Right lobe of liver (tissue), 6 donors: ENCODE measurements at regions of chr11 and their contacts with region 1.

Region 1: DNA sequence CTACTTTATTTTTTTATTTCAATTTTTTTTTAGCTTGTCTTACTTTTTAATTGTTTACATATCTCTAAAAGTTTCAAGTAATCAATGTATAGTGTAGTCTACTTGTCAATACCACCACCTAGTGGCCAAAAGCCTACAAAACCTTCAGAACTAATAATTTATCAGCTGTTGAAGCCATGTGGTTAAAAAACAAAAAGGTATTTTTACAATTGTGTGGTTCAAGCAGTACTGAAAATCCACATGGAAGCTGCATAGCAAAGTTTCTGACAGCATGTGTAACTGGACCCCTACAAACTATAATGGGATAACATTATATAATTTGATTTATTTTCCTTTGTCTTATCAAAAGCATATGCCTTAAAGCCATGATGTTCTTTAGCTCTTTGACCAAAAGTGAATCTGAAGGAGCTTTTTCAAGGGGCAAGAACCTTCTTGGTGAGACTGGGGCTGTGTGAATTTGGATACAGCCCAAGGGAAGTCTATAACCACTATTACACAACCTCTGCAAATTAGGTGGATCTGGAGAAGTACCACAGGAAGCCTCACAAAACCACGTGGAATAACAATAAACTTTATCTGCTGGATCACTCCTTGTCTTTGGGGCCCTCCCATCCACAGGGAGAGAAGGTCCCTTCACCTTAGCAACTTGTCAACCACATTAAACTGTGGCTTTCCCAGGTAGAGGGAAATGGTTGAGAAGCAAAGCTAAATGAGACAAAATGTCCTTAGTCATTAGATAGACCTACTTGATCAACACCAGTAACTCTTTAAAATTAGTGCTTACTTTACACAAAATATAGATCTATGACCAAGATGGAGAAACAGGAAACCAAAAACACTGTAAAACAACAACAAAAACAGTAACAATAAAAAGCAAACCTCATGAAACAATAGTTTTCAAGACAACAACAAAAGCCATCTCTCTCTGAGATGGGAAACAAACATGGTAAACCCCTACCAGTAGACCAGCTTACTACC is 9.9 kb downstream of the NARS2 start:
- DNase-seq: no peak
- ATAC-seq: peak; percentile 72 to 77 (median 74)
- H3K4me3 ChIP-seq: no peak overlapping the region
- H3K27ac ChIP-seq: no peak overlapping the region
- H3K4me1 ChIP-seq: peaks cover 0 to 15% (median 7%) of the 10 kb centered on the region in 4 donors
- H3K27me3 ChIP-seq: no peaks in the 10 kb centered on the region
- CTCF ChIP-seq: peak; percentile 73 to 83 (median 76)
- POLR2A ChIP-seq: no peak

Region 2: GRCh38 chr11:78416305-78417178 is 148.2 kb before region 1 on chr11:
- intact Hi-C with region 1: loop called in 1 of 2 experiments (anchors 10 kb)
- DNase-seq: peak; percentile 87 to 90 (median 89)
- ATAC-seq: peak; percentile 71 to 76 (median 74)
- H3K4me3 ChIP-seq: peak overlapping the region; percentile 66 to 74 (median 69)
- H3K27ac ChIP-seq: peak overlapping the region; percentile 87 to 97 (median 90)
- H3K4me1 ChIP-seq: peaks cover 0 to 23% (median 9%) of the 10 kb centered on the region in 4 donors
- H3K27me3 ChIP-seq: no peaks in the 10 kb centered on the region
- CTCF ChIP-seq: peak; percentile 30 to 56 (median 38)
- POLR2A ChIP-seq: peak; percentile 83